Left ventricle myocardium inferior (tissue), 1 donor: ENCODE measurements at regions of chr2 and their contacts with region 1.

Region 1: GRCh38 chr2:100242891-100243619 is 79.2 kb downstream of the LONRF2 start:
- DNase-seq: peak; percentile 74
- H3K4me3 ChIP-seq: no peak overlapping the region
- H3K27ac ChIP-seq: no peak overlapping the region
- H3K4me1 ChIP-seq: peaks cover 6% of the 10 kb centered on the region
- H3K27me3 ChIP-seq: peaks cover 7% of the 10 kb centered on the region
- CTCF ChIP-seq: peak; percentile 84

Region 2: DNA sequence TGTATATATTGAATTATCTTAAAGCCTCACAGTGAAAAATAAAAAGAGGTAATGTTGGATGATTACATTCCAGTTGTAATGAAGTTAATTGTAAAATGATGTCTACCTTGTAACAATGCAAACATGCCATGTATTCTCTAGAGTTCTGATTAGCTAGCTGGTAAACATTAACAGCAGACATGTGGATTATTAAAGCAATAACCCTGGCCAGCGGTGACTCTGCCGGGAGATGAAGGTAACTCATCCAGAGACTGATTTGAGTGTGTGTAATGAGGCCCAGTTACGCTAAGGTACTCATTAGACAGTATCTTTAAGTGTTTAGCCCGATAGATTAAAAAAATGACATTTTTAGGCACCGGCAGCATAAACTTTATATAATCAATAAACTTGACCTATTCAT is 673.7 kb before region 1 on chr2:
- intact Hi-C with region 1: loop called (anchors 10 kb)
- DNase-seq: no peak
- H3K4me3 ChIP-seq: no peak overlapping the region
- H3K27ac ChIP-seq: no peak overlapping the region
- H3K4me1 ChIP-seq: peaks cover 4% of the 10 kb centered on the region
- H3K27me3 ChIP-seq: no peaks in the 10 kb centered on the region
- CTCF ChIP-seq: no peak

Region 3: DNA sequence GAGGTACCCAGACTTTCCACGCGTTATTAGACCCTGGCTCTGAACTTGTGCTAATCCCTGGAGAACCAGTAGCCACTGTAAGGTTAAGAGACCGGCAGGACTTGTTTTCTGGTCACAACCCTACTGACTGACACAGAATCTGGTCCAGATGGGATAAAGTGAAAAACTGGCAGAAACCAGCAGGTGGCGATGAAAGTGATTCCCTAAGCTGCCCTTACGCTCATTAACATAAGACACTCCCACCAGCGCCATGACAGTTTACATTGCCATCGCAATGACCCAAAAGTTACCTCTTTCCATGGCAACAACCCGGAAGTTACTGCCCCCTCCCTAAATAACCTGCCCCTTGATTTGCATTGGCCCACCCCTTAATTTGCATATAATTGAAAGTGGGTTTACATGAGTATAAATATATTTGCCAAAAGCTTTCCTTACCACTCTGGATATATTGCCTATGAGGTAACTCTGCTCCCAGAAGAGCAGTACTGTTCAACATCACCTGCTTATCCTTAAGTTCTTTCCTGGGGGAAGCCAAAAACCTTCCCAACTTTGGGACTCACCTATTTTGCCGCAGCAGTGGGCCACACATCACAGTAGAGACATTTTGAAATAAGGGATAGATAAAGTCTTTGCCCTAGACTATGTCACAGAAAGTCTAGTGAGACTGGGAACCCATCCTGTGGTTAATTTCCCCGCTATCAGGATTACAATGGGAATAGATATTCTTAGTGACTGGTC is 64.8 kb before region 1 on chr2:
- intact Hi-C with region 1: loop called (anchors 10 kb)
- DNase-seq: no peak
- H3K4me3 ChIP-seq: no peak overlapping the region
- H3K27ac ChIP-seq: no peak overlapping the region
- H3K4me1 ChIP-seq: peaks cover 7% of the 10 kb centered on the region
- H3K27me3 ChIP-seq: no peaks in the 10 kb centered on the region
- CTCF ChIP-seq: peak; percentile 52